Activated B cell treated with CpG ODN at 0.5 μM for 24 hours (primary cell): ENCODE measurements at regions of chr6 and their contacts with region 1.

Region 1: DNA sequence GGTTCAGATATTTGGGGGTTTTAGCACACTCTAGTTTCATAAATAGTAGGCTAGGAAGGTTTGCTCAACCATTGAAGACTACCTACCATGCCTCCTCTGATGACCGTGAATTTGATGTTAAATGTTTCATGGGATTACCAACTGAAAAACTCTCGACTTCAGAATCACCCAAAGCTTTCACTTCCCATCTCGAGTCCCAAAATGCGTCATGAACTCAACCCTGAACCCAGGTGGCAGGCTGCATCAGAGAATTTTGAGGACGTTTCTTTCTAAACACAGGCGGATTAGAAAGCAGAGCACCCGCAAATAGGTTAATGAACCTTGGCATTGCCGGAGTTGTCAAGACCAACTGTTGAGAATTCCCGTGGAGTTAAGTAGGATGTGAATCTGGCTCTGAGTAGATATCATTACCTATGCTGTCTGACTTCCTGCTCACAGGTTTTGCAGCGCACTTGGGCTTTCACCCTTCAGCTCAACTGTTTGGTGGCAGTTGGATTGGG is 98.4 kb upstream of the ADTRP start:
- DNase-seq: no peak
- ATAC-seq: peak; percentile 89
- H3K4me3 Mint-ChIP-seq: peak overlapping the region; percentile 36
- H3K27ac Mint-ChIP-seq: peak overlapping the region; percentile 47
- H3K4me1 Mint-ChIP-seq: peaks cover 20% of the 10 kb centered on the region
- H3K27me3 Mint-ChIP-seq: no peaks in the 10 kb centered on the region
- CTCF ChIP-seq: no peak

Region 2: GRCh38 chr6:10659699-10660348 is 1217.2 kb before region 1 on chr6:
- CTCF ChIA-PET with region 1: no interaction called
- POLR2A ChIA-PET with region 1: no interaction called
- intact Hi-C with region 1: no loop called
- DNase-seq: no peak
- ATAC-seq: no peak
- H3K4me3 Mint-ChIP-seq: peak overlapping the region; percentile 55
- H3K27ac Mint-ChIP-seq: no peak overlapping the region
- H3K4me1 Mint-ChIP-seq: peaks cover 12% of the 10 kb centered on the region
- H3K27me3 Mint-ChIP-seq: peaks cover 15% of the 10 kb centered on the region
- CTCF ChIP-seq: no peak

Region 3: DNA sequence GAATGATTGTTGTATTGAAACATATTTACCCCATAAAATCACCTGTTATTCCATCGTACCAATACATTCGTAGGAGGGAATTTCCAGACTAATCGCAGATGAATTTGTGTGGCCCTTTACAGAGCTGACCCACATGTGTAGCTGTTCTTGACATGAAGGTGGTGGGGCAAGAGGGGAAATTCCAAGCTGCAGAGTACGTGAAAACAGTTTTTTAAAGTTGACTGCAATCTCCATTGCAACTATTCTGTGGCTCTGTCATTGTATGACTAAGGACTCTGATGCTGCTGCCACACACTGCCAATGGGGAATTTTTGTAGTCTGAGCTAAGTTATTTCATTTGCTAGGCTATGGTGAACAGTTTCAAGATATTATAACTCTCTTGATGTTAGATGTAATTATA is 52.0 kb before region 1 on chr6:
- CTCF ChIA-PET with region 1: no interaction called
- POLR2A ChIA-PET with region 1: interaction called, 10 read pairs
- intact Hi-C with region 1: loop called (anchors 2 kb)
- DNase-seq: no peak
- ATAC-seq: peak; percentile 83
- H3K4me3 Mint-ChIP-seq: peak overlapping the region; percentile 36
- H3K27ac Mint-ChIP-seq: peak overlapping the region; percentile 64
- H3K4me1 Mint-ChIP-seq: peaks cover 42% of the 10 kb centered on the region
- H3K27me3 Mint-ChIP-seq: no peaks in the 10 kb centered on the region
- CTCF ChIP-seq: no peak